ENCODE measurements at regions of chr2 and their contacts with region 1.

Region 1: GRCh38 chr2:45930396-45930792 is 278.9 kb downstream of the PRKCE start:
- DNase-seq: peak; percentile 51 to 66
- H3K4me3 ChIP-seq: no peak overlapping the region
- H3K4me3 Mint-ChIP-seq: no peak overlapping the region
- H3K27ac Mint-ChIP-seq: no peak overlapping the region
- H3K4me1 ChIP-seq: peaks cover 11% of the 10 kb centered on the region
- H3K4me1 Mint-ChIP-seq: no peaks in the 10 kb centered on the region
- H3K27me3 ChIP-seq: no peaks in the 10 kb centered on the region
- H3K27me3 Mint-ChIP-seq: no peaks in the 10 kb centered on the region
- CTCF ChIP-seq: no peak

Region 2: GRCh38 chr2:45912109-45912508 is 18.3 kb before region 1 on chr2:
- CTCF ChIA-PET with region 1: interaction called, 6 read pairs
- POLR2A ChIA-PET with region 1: interaction called, 3 read pairs
- intact Hi-C with region 1: loop called (anchors 2 kb)
- DNase-seq: peak; percentile 85 to 86
- H3K4me3 ChIP-seq: no peak overlapping the region
- H3K4me3 Mint-ChIP-seq: peak overlapping the region; percentile 28
- H3K27ac Mint-ChIP-seq: peak overlapping the region; percentile 97
- H3K4me1 ChIP-seq: peaks cover 54% of the 10 kb centered on the region
- H3K4me1 Mint-ChIP-seq: peaks cover 51% of the 10 kb centered on the region
- H3K27me3 ChIP-seq: no peaks in the 10 kb centered on the region
- H3K27me3 Mint-ChIP-seq: no peaks in the 10 kb centered on the region
- CTCF ChIP-seq: no peak

Measured in Caco-2 (cell line).